Activated CD4-positive, alpha-beta T cell treated with anti-CD3 and anti-CD28 coated beads for 36 hours (primary cell): ENCODE measurements at regions of chr20 and their contacts with region 1.

Region 1: DNA sequence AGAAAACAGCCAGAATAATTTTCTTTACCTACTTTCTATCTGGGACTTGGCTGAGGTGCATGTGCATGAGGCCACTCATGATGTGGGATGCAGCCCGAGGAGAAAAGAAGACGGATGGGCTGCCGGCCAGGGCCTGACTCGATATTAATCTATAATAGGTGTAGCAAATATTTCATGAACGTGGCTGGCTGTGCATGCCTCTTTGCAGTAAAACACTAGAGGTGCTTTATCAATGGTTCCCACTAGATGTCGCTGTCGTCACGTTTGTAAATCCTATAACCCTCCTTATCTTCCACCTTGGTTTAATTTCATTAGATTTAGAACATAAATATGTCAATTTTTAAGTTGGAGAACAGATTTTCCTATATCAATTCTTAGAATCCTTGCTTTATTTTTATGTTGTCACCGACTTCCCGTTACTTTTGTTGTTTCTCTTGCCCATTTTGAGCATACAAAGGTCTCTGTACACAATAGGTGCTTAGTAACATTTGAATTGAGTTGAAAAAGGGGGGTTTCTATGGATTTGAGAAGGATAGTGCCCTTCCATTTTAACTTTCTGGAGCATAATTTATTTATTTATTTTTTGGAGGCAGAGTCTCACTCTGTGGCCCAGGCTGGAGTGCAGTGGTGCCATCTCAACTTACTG is 19.6 kb upstream of the FERMT1 start:
- DNase-seq: peak; percentile 67
- ATAC-seq: peak; percentile 53
- H3K4me3 Mint-ChIP-seq: no peak overlapping the region
- H3K27ac Mint-ChIP-seq: no peak overlapping the region
- H3K4me1 Mint-ChIP-seq: no peaks in the 10 kb centered on the region
- H3K27me3 Mint-ChIP-seq: peaks cover 17% of the 10 kb centered on the region

Region 2: DNA sequence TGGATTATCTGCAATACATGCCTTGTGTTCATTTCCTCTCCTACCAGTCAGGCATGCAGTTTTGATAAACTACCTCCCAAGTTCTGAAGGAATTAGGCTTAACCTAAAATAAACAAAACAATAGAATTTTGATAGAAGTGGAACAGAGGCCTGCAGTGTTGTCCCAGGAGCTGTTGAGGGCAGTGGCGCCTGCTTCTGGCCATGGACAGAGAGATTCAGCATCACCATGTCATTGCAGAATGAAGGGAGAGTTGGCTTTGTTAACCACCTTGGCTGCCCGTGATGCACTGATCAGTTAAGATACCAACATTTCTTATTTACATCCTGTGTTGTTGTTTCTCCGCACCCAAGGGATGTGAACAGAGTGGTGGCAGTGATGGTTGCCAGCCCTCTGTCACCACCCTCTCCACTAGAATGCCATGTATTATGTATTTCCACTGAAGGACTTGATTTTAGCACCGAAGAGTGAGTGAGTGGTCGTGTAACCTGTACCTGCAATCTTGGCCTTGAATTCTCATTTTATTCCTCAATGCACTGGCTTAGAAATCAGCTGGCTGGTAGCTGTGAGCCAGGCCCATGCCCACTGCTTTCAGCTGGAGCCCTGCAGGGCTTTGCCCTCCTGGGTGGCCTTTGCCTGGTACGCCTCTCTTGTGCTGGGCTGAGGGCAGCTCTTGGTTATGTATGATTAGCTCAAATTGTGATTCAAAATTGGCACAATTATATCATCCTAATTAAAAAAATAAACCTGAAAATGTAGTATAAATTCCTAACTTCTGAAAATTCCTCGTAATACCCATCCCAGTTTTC is 335.8 kb before region 1 on chr20:
- CTCF ChIA-PET with region 1: no interaction called
- POLR2A ChIA-PET with region 1: no interaction called
- intact Hi-C with region 1: no loop called
- DNase-seq: peak; percentile 17
- ATAC-seq: peak; percentile 68
- H3K4me3 Mint-ChIP-seq: no peak overlapping the region
- H3K27ac Mint-ChIP-seq: no peak overlapping the region
- H3K4me1 Mint-ChIP-seq: peaks cover 35% of the 10 kb centered on the region
- H3K27me3 Mint-ChIP-seq: no peaks in the 10 kb centered on the region

Region 3: GRCh38 chr20:6333110-6333509 is 190.6 kb after region 1 on chr20:
- CTCF ChIA-PET with region 1: no interaction called
- POLR2A ChIA-PET with region 1: no interaction called
- intact Hi-C with region 1: no loop called
- DNase-seq: no peak
- ATAC-seq: no peak
- H3K4me3 Mint-ChIP-seq: no peak overlapping the region
- H3K27ac Mint-ChIP-seq: no peak overlapping the region
- H3K4me1 Mint-ChIP-seq: no peaks in the 10 kb centered on the region
- H3K27me3 Mint-ChIP-seq: no peaks in the 10 kb centered on the region

Region 4: DNA sequence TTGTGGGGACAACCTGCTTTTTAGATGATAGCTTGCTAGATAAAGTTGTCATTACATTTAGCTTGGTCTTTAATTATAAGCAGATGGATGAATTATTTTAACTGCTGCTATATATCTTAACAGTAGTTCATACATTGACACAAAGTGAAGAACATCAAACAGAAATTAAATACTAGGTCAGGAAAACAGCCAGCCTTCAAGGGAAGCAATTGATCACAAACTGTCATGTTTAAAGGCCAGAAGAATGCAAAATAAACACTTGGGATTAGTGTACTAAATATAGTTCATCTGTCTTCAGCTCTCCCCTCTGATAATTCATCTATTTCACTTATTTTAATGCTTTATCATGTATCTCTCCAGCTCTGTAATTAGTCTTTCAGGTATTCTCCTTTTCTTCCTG is 205.4 kb after region 1 on chr20:
- CTCF ChIA-PET with region 1: no interaction called
- POLR2A ChIA-PET with region 1: no interaction called
- intact Hi-C with region 1: no loop called
- DNase-seq: no peak
- ATAC-seq: no peak
- H3K4me3 Mint-ChIP-seq: no peak overlapping the region
- H3K27ac Mint-ChIP-seq: no peak overlapping the region
- H3K4me1 Mint-ChIP-seq: no peaks in the 10 kb centered on the region
- H3K27me3 Mint-ChIP-seq: no peaks in the 10 kb centered on the region

Region 5: GRCh38 chr20:7094438-7094997 is 952.0 kb after region 1 on chr20:
- CTCF ChIA-PET with region 1: no interaction called
- POLR2A ChIA-PET with region 1: no interaction called
- intact Hi-C with region 1: loop called in 1 of 2 experiments (anchors 5 kb)
- DNase-seq: peak; percentile 40
- ATAC-seq: no peak
- H3K4me3 Mint-ChIP-seq: no peak overlapping the region
- H3K27ac Mint-ChIP-seq: no peak overlapping the region
- H3K4me1 Mint-ChIP-seq: no peaks in the 10 kb centered on the region
- H3K27me3 Mint-ChIP-seq: no peaks in the 10 kb centered on the region

Region 6: DNA sequence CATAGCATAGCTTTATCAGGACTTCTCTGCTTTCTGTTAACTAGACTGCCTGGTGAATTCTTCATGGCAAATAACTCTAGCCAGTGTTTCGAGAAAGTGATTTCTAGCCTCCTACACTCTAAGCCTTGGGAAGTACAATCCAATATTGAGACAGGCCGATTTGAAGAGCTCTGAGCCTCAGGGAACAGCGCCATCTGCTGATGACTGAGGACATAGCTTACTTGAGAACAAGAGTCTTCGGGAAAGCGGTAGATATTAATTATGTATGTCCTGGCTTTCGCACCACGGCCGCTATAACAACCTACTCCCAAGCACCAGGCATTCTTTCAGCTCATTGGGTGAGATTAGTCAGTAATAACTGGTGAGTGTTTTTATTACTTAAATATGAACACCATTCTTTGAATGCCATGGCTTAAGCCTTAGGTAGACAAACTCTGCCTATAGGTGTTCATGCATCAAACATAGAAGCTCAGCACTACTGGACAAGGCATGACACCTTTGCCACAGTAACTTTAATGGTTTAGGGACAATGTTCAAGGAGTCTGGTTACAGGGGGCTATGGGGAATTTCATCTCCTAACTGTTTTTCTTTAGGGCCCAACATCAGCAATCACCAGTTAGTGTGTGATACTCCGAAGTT is 1143.6 kb after region 1 on chr20:
- CTCF ChIA-PET with region 1: interaction called, 3 read pairs
- POLR2A ChIA-PET with region 1: no interaction called
- intact Hi-C with region 1: loop called in 1 of 2 experiments (anchors 1 kb)
- DNase-seq: peak; percentile 62
- ATAC-seq: no peak
- H3K4me3 Mint-ChIP-seq: no peak overlapping the region
- H3K27ac Mint-ChIP-seq: no peak overlapping the region
- H3K4me1 Mint-ChIP-seq: no peaks in the 10 kb centered on the region
- H3K27me3 Mint-ChIP-seq: no peaks in the 10 kb centered on the region

Region 7: GRCh38 chr20:7375905-7376304 is 1233.4 kb after region 1 on chr20:
- CTCF ChIA-PET with region 1: no interaction called
- POLR2A ChIA-PET with region 1: no interaction called
- intact Hi-C with region 1: loop called in 1 of 2 experiments (anchors 2 kb)
- DNase-seq: no peak
- ATAC-seq: no peak
- H3K4me3 Mint-ChIP-seq: no peak overlapping the region
- H3K27ac Mint-ChIP-seq: no peak overlapping the region
- H3K4me1 Mint-ChIP-seq: no peaks in the 10 kb centered on the region
- H3K27me3 Mint-ChIP-seq: no peaks in the 10 kb centered on the region